CD14-positive monocyte (primary cell): ENCODE measurements at regions of chr5 and their contacts with region 1.

Region 1: GRCh38 chr5:81751009-81751835 is at the start of gene SSBP2:
- DNase-seq: peak; percentile 95 to 100 (median 99)
- H3K4me3 ChIP-seq: peak within 1 kb of the TSS; percentile 83 to 88 (median 85)
- H3K4me3 Mint-ChIP-seq: peak within 1 kb of the TSS; percentile 95 to 99
- H3K27ac ChIP-seq: peak within 1 kb of the TSS; percentile 86 to 88
- H3K27ac Mint-ChIP-seq: peak within 1 kb of the TSS; percentile 84 to 94 (median 92)
- H3K4me1 ChIP-seq: peaks cover 12 to 18% of the 10 kb centered on the region in 2 donors
- H3K4me1 Mint-ChIP-seq: peaks cover 28% of the 10 kb centered on the region
- H3K27me3 ChIP-seq: peaks cover 4 to 5% of the 10 kb centered on the region in 2 donors
- H3K27me3 Mint-ChIP-seq: peaks cover 2 to 13% (median 5%) of the 10 kb centered on the region in 3 donors
- CTCF ChIP-seq: no peak
- polyA plus RNA-seq, gene SSBP2: 29.1 to 55.2 (median 53.4) TPM

Region 2: GRCh38 chr5:80407735-80408482 is 1343.3 kb before region 1 on chr5 and contains the start of gene ZFYVE16:
- intact Hi-C with region 1: no loop called
- DNase-seq: peak; percentile 98 to 99 (median 99)
- H3K4me3 ChIP-seq: peak within 1 kb of the TSS; percentile 80 to 97 (median 95)
- H3K4me3 Mint-ChIP-seq: peak within 1 kb of the TSS; percentile 90 to 94
- H3K27ac ChIP-seq: peak within 1 kb of the TSS; percentile 93 to 100
- H3K27ac Mint-ChIP-seq: peak within 1 kb of the TSS; percentile 97 to 100 (median 99)
- H3K4me1 ChIP-seq: peaks cover 31 to 44% of the 10 kb centered on the region in 2 donors
- H3K4me1 Mint-ChIP-seq: peaks cover 40% of the 10 kb centered on the region
- H3K27me3 ChIP-seq: no peaks in the 10 kb centered on the region
- H3K27me3 Mint-ChIP-seq: peaks cover 0 to 2% (median 0%) of the 10 kb centered on the region in 3 donors
- CTCF ChIP-seq: peak; percentile 46
- polyA plus RNA-seq, gene ZFYVE16: 9.4 to 15.8 (median 10.7) TPM

Region 3: DNA sequence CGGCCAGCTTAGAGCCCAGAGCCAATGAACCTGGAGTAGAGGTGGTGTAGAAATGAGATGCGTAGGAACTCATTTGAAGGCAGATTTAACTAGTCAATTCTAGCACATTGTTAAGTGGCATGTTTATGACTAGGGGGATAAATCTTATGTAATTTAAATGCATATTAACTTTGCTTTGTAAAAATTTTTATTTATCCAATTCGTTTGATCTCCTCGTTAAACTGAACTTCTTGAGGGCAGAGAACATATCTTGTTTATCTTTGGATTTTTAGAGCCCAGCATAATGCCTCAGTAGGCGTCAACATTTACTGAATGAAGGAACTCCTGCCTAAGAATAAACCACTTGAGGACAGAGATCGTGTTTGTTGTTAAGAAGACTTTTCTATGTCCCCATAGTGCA is 316.2 kb before region 1 on chr5:
- intact Hi-C with region 1: no loop called
- DNase-seq: no peak
- H3K4me3 ChIP-seq: no peak overlapping the region
- H3K4me3 Mint-ChIP-seq: no peak overlapping the region
- H3K27ac ChIP-seq: no peak overlapping the region
- H3K27ac Mint-ChIP-seq: no peak overlapping the region
- H3K4me1 ChIP-seq: no peaks in the 10 kb centered on the region
- H3K4me1 Mint-ChIP-seq: no peaks in the 10 kb centered on the region
- H3K27me3 ChIP-seq: no peaks in the 10 kb centered on the region
- H3K27me3 Mint-ChIP-seq: no peaks in the 10 kb centered on the region
- CTCF ChIP-seq: no peak

Region 4: GRCh38 chr5:81639556-81639955 is 111.7 kb before region 1 on chr5:
- intact Hi-C with region 1: no loop called
- DNase-seq: no peak
- H3K4me3 ChIP-seq: no peak overlapping the region
- H3K4me3 Mint-ChIP-seq: no peak overlapping the region
- H3K27ac ChIP-seq: no peak overlapping the region
- H3K27ac Mint-ChIP-seq: no peak overlapping the region
- H3K4me1 ChIP-seq: no peaks in the 10 kb centered on the region
- H3K4me1 Mint-ChIP-seq: no peaks in the 10 kb centered on the region
- H3K27me3 ChIP-seq: no peaks in the 10 kb centered on the region
- H3K27me3 Mint-ChIP-seq: no peaks in the 10 kb centered on the region
- CTCF ChIP-seq: no peak

Region 5: DNA sequence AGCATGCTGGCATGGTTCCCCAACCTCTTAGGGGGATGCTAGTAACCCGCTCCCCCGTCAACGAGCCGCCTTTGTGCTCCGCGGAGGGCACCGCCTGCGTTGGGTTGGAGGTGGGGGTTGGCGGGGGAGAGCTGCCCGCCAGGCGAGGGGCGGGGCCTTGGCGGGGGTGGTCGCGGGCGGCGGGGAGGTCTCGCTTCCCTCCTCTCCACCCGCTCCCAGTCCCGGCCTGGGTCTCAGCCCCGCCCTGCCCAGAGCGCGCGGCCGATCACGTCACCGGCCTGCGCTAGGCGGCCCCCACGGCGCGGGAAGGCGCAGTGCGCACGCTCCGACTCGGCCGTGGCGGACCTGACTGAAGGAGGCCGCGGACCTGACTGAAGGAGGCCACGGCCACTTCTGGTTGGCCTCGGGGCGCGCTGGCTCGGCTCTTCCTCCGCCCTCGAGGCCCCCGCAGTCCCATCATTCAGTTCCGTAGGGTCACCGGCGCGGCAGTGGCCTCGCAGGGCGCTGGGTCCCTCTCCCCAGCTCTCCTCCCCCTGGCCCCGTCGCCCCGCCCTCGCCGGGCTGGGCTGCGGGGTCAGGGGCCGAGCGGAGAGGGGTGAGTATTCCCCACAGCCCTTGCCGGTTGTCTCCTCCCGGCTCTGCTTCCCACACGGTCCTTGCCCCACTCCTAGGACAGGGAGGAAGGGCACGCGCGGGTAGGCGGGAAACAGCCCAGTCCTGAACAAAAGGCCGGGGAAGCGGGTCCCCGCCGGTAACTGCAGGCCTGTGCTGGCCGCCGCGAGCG is 220.7 kb after region 1 on chr5 and contains the start of gene ATG10:
- intact Hi-C with region 1: loop called (anchors 2 to 10 kb)
- DNase-seq: peak; percentile 84 to 87 (median 85)
- H3K4me3 ChIP-seq: peak within 1 kb of the TSS; percentile 81 to 99 (median 91)
- H3K4me3 Mint-ChIP-seq: peak within 1 kb of the TSS; percentile 87 to 94
- H3K27ac ChIP-seq: peak within 1 kb of the TSS; percentile 82 to 94
- H3K27ac Mint-ChIP-seq: peak within 1 kb of the TSS; percentile 92 to 97 (median 95)
- H3K4me1 ChIP-seq: peaks cover 8 to 16% of the 10 kb centered on the region in 2 donors
- H3K4me1 Mint-ChIP-seq: peaks cover 26% of the 10 kb centered on the region
- H3K27me3 ChIP-seq: no peaks in the 10 kb centered on the region
- H3K27me3 Mint-ChIP-seq: peaks cover 0 to 3% (median 2%) of the 10 kb centered on the region in 3 donors
- CTCF ChIP-seq: no peak
- polyA plus RNA-seq, gene ATG10: 2.1 to 7.9 (median 5.6) TPM

Region 6: DNA sequence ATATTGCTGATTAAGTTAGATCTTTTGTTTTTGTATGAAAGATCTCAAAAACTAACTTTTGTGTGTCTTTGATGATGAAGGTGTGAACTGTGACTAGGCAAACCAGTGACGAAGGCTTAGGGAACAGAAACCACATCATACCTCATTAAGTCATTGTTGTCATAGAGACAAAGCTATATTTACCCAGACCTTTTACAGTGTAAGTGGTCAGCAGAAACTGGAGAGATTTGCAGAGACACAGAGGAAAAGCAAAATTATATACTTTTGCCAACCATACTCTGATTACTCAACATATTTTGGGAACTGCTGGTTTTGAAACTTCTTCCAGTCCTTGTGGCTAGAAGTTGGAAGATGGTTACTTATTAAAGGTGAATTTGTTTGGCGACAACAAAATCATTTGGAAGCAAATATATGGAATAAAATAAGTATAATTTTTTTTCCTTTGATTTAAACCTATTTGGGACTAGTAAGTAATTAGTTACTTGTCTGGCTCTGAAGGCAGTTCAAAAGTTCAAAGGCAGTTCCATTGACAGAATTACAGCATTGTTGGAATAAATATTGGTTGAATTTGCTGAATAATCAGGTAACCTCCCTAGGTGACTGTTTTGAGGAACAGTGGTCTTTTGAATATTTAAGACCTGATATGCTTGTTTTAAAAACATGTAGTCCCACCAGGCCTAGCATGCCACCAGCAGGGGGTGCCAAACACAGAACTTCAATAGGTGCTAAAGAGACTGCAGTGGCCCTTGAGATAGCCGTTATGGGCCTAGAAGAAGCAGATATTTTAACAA is 423.1 kb after region 1 on chr5:
- intact Hi-C with region 1: loop called in 1 of 2 experiments (anchors 10 kb)
- DNase-seq: peak; percentile 68 to 88 (median 87)
- H3K4me3 ChIP-seq: no peak overlapping the region
- H3K4me3 Mint-ChIP-seq: no peak overlapping the region
- H3K27ac ChIP-seq: peak overlapping the region in 1 of 2 donors; percentile 50
- H3K27ac Mint-ChIP-seq: peak overlapping the region; percentile 63 to 86 (median 75)
- H3K4me1 ChIP-seq: peaks cover 11 to 13% of the 10 kb centered on the region in 2 donors
- H3K4me1 Mint-ChIP-seq: peaks cover 16% of the 10 kb centered on the region
- H3K27me3 ChIP-seq: no peaks in the 10 kb centered on the region
- H3K27me3 Mint-ChIP-seq: no peaks in the 10 kb centered on the region
- CTCF ChIP-seq: peak; percentile 79